Mammary epithelial cell (primary cell): ENCODE measurements at regions of chr20 and their contacts with region 1.

Region 1: DNA sequence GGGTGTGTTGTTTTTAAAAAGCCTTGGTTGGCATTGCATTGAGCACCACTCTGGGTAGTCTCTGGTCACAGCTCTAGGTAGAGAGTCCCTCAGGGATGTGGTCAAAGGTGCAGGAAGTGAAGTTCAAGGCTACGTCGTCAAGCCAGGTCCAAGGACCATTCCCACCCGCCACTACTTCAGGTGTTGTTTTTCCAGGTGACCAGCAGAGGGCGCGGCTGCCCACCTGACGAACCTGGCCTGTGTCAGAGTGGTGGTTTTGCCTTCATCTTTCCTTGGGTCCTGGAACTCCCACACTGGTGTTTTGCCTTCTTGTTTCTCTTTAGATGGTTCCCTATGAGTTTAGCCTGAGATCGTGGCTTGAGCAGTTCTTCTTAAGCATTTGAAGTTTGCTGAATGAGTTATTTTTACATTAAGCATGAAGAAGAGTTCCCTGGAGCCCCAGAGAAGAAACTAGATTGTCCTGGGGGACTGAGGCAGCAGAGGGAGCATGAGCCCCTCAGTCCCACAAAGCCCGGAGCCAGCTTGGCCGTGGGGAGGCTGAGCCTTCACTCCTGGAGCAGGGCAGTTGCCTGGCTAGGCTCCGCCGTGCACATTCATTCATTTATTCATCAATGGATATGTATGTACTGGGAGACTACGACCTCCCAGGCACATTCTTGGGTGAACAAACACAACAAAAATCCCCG is 5.6 kb upstream of the PHACTR3 start:
- DNase-seq: peak; percentile 8
- H3K4me3 ChIP-seq: no peak overlapping the region
- H3K27ac ChIP-seq: no peak overlapping the region
- H3K4me1 ChIP-seq: no peaks in the 10 kb centered on the region
- H3K27me3 ChIP-seq: peaks cover 4% of the 10 kb centered on the region
- CTCF ChIP-seq: peak; percentile 67 to 86

Region 2: GRCh38 chr20:59525500-59526241 is 73.1 kb before region 1 on chr20:
- CTCF ChIA-PET with region 1: no interaction called
- dilution Hi-C with region 1: no loop called
- in situ Hi-C with region 1: no loop called
- intact Hi-C with region 1: no loop called
- DNase-seq: peak; percentile 19
- H3K4me3 ChIP-seq: no peak overlapping the region
- H3K27ac ChIP-seq: no peak overlapping the region
- H3K4me1 ChIP-seq: no peaks in the 10 kb centered on the region
- H3K27me3 ChIP-seq: peaks cover 3% of the 10 kb centered on the region
- CTCF ChIP-seq: peak; percentile 68 to 86

Region 3: DNA sequence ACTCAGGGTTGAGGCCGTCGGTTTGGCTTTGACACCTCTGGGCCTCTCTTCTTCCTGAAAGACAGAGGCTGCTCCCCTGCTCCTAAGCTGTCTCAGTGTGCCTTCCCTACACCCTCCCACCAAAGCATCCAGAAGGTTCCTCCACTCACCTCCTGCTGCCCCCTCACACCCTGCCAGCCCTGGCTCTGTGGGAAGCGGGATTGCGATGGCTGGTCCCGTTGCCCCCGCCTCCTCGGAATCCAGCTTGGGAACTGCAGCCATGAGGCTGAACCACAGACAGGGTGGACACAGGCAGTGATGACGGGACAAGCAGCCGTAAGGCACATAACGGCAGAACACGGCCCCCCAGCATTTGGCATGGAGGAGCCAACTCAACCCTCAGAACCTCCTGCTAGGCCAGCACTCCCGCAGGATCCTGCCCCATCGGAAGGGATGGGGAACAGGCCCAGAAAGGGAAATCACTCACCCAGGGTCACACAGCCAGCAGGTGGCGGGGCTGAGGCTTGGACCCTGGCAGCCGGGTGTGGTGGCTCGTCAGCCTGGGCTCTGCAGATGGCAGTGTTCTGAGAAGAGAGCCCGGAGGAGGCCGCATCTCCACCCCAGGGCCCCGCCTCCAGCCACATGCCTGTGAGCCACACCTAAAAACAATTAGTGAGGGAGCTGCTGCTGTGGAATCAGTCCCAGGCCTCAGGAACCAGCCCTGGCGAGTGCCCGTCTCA is 145.2 kb after region 1 on chr20:
- CTCF ChIA-PET with region 1: no interaction called
- dilution Hi-C with region 1: no loop called
- in situ Hi-C with region 1: loop called in 1 of 2 experiments (anchors 10 kb)
- intact Hi-C with region 1: no loop called
- DNase-seq: no peak
- H3K4me3 ChIP-seq: no peak overlapping the region
- H3K27ac ChIP-seq: no peak overlapping the region
- H3K4me1 ChIP-seq: no peaks in the 10 kb centered on the region
- H3K27me3 ChIP-seq: peaks cover 6% of the 10 kb centered on the region
- CTCF ChIP-seq: no peak

Region 4: GRCh38 chr20:59751056-59751688 is 152.4 kb after region 1 on chr20:
- CTCF ChIA-PET with region 1: interaction called, 4 read pairs
- dilution Hi-C with region 1: no loop called
- in situ Hi-C with region 1: loop called (anchors 10 kb)
- intact Hi-C with region 1: loop called (anchors 1 kb)
- DNase-seq: peak; percentile 42
- H3K4me3 ChIP-seq: no peak overlapping the region
- H3K27ac ChIP-seq: no peak overlapping the region
- H3K4me1 ChIP-seq: no peaks in the 10 kb centered on the region
- H3K27me3 ChIP-seq: peaks cover 7% of the 10 kb centered on the region
- CTCF ChIP-seq: peak; percentile 64 to 85

Region 5: DNA sequence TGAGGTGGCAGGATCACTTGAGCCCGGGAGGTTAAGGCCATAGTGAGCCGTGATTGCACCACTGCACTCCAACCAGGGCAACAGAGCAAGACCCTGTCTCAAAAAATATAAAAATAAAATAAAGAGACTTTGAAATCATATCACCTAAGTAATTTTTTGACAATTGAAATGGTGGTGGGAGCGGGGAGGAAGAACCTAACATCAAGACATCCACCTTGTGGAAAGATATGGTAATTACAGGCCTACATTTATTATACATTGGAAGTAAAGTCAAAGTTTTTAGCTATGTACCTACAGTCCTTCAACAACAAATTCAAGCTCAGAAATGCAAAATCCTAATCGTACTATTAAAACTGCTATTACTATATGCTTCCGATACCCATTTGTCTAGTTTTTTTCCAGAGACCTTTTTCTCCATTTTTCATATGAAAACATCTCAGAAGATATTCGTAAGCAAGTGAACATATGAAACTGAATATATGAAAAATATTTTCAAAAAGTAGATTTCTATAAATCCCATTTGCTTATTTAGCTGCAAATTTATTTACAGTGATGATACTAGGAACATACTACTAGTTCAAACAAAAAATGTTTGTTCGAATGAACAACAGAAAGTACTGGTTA is 251.4 kb after region 1 on chr20:
- CTCF ChIA-PET with region 1: no interaction called
- dilution Hi-C with region 1: no loop called
- in situ Hi-C with region 1: no loop called
- intact Hi-C with region 1: loop called (anchors 5 kb)
- DNase-seq: no peak
- H3K4me3 ChIP-seq: no peak overlapping the region
- H3K27ac ChIP-seq: no peak overlapping the region
- H3K4me1 ChIP-seq: no peaks in the 10 kb centered on the region
- H3K27me3 ChIP-seq: no peaks in the 10 kb centered on the region
- CTCF ChIP-seq: peak; percentile 66 to 70